ACHN (cell line): ENCODE measurements at regions of chr21 and their contacts with region 1.

Region 1: DNA sequence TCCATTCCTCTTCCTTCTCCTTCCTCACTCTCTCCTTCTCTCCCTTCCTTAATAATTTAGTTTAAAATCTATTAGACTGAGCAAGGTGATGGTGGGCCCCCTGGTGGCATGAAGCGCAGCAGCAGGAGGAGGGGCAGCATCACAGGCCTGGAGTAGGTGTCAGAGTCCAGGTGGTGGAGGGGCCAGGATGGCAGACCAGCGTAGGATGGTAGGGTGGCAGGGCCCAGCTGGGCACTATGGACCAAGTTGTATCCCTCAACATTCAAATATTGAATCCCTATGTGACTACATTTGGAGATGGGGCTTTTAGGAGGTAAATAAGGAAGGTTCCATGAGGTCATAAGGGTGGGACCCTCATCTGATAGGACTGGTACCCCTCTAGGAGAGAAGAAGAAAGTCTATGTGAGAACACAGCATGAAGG is 61.0 kb downstream of the WDR4 start:
- DNase-seq: peak; percentile 31

Region 2: GRCh38 chr21:42593007-42593806 is 225.1 kb before region 1 on chr21:
- in situ Hi-C with region 1: loop called (anchors 25 kb)
- DNase-seq: peak; percentile 45